ENCODE measurements at regions of chr2 and their contacts with region 1.

Region 1: DNA sequence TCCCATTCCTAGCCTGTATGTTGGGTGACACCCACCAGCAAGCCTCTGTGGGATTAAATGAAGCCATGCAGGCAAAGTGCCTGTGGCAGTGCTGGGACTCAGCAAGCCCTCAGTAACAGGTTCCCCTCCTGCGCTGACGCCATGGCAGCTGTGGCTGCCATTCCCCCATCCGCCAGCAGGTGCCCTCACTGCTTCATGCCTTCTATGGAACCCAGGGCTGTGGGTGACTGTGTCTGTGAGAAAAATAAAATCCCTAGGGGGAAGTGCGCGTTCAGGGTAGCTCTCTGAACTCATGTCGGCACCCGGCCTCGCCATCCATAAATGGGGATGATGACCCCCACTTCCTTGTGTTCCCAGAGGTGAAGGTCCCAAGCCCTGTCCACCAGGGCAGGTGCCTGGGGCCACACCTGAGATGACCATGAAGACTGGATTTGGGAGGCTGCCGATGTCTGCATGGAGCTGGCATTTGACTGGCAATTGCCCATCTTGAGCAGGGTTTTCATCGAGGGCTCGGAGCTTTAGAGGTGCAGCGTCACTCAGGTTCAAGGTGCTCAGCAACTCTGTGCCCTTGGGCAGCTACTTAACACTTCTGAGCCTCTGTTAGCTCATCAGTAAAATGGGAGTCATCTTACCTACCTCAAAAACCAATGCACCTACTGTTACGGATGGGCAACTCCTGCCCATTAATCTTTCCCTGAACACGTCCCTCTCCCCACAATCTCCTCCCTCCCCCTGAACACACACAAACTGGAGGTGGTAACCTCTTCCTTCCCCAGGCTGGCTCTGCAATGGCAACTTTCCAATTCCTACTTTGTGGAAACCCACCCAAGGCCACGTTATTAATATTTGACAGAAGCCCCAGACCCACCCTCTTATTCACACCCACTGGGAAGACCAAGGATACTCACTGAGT is 2.9 kb upstream of the MAL start:
- DNase-seq: peak; percentile 78 to 92 (median 84)
- ATAC-seq: peak; percentile 71
- H3K4me3 ChIP-seq: no peak overlapping the region
- H3K4me3 Mint-ChIP-seq: peak overlapping the region; percentile 84
- H3K27ac ChIP-seq: no peak overlapping the region
- H3K27ac Mint-ChIP-seq: peak overlapping the region; percentile 77
- H3K4me1 ChIP-seq: peaks cover 50% of the 10 kb centered on the region
- H3K4me1 Mint-ChIP-seq: peaks cover 50% of the 10 kb centered on the region
- H3K27me3 ChIP-seq: no peaks in the 10 kb centered on the region
- H3K27me3 Mint-ChIP-seq: no peaks in the 10 kb centered on the region
- CTCF ChIP-seq: peak; percentile 90

Region 2: DNA sequence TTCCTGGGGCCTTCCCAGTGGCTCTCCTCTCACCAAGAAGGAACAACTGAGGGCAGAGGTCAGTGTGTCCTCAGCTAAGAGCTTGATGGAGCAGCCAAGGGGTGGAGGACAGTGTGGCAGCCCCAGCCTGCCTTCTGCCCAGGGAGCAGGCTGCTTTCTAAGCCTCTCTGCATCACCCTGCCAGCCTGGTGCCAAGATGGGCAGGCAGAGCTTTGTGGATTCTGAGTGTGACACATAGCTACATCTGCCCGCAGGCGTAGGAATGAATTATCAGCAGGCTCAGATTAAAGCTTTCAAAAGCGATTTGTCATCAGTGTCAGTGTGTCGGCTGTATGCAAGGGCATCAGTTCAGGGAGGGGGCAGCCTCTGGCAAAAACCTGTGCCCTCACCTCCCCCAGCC is 11.7 kb after region 1 on chr2:
- CTCF ChIA-PET with region 1: interaction called, 14 read pairs
- POLR2A ChIA-PET with region 1: interaction called, 29 read pairs
- intact Hi-C with region 1: no loop called
- DNase-seq: peak in 1 of 14 experiments; percentile 21
- ATAC-seq: no peak
- H3K4me3 ChIP-seq: no peak overlapping the region
- H3K4me3 Mint-ChIP-seq: no peak overlapping the region
- H3K27ac ChIP-seq: no peak overlapping the region
- H3K27ac Mint-ChIP-seq: peak overlapping the region; percentile 71
- H3K4me1 ChIP-seq: peaks cover 93% of the 10 kb centered on the region
- H3K4me1 Mint-ChIP-seq: peaks cover 95% of the 10 kb centered on the region
- H3K27me3 ChIP-seq: no peaks in the 10 kb centered on the region
- H3K27me3 Mint-ChIP-seq: no peaks in the 10 kb centered on the region
- CTCF ChIP-seq: no peak

Region 3: GRCh38 chr2:95053543-95053942 is 31.0 kb after region 1 on chr2:
- CTCF ChIA-PET with region 1: interaction called, 37 read pairs
- POLR2A ChIA-PET with region 1: interaction called, 77 read pairs
- intact Hi-C with region 1: loop called (anchors 2 to 5 kb)
- DNase-seq: peak in 3 of 14 experiments; percentile 23 to 45 (median 42)
- ATAC-seq: peak; percentile 11
- H3K4me3 ChIP-seq: no peak overlapping the region
- H3K4me3 Mint-ChIP-seq: peak overlapping the region; percentile 2
- H3K27ac ChIP-seq: no peak overlapping the region
- H3K27ac Mint-ChIP-seq: peak overlapping the region; percentile 83
- H3K4me1 ChIP-seq: peaks cover 75% of the 10 kb centered on the region
- H3K4me1 Mint-ChIP-seq: peaks cover 85% of the 10 kb centered on the region
- H3K27me3 ChIP-seq: no peaks in the 10 kb centered on the region
- H3K27me3 Mint-ChIP-seq: no peaks in the 10 kb centered on the region
- CTCF ChIP-seq: no peak

Region 4: GRCh38 chr2:95076784-95077529 is 54.4 kb after region 1 on chr2:
- CTCF ChIA-PET with region 1: interaction called, 223 read pairs
- POLR2A ChIA-PET with region 1: interaction called, 749 read pairs
- intact Hi-C with region 1: loop called (anchors 1 kb)
- DNase-seq: peak; percentile 85 to 96 (median 93)
- ATAC-seq: peak; percentile 75
- H3K4me3 ChIP-seq: peak overlapping the region; percentile 52
- H3K4me3 Mint-ChIP-seq: peak overlapping the region; percentile 90
- H3K27ac ChIP-seq: peak overlapping the region; percentile 37 to 92
- H3K27ac Mint-ChIP-seq: peak overlapping the region; percentile 93
- H3K4me1 ChIP-seq: peaks cover 75% of the 10 kb centered on the region
- H3K4me1 Mint-ChIP-seq: peaks cover 80% of the 10 kb centered on the region
- H3K27me3 ChIP-seq: no peaks in the 10 kb centered on the region
- H3K27me3 Mint-ChIP-seq: no peaks in the 10 kb centered on the region
- CTCF ChIP-seq: peak; percentile 95

Region 5: DNA sequence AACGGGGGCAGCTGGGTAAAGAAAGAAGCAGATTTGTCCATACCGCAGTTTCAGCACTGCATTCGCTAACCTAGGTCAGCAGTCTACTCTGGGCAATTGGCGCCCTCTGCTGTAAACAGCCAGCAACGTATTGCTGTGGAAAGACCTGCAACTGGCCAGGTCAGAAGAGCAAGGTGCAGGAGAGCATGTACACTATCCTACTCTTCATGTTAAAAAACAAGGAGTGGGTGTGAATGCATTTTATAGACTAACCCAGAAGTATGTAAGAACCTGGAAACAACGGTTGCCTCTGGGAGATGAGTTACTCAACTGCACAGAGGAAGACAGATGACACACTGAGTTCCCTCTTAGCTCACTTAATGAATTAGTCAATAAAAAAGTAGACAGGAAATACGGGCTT is 92.9 kb after region 1 on chr2:
- CTCF ChIA-PET with region 1: interaction called, 85 read pairs
- POLR2A ChIA-PET with region 1: interaction called, 34 read pairs
- intact Hi-C with region 1: loop called (anchors 1 kb)
- DNase-seq: peak; percentile 59 to 87 (median 71)
- ATAC-seq: peak; percentile 99
- H3K4me3 ChIP-seq: no peak overlapping the region
- H3K4me3 Mint-ChIP-seq: peak overlapping the region; percentile 36
- H3K27ac ChIP-seq: no peak overlapping the region
- H3K27ac Mint-ChIP-seq: peak overlapping the region; percentile 45
- H3K4me1 ChIP-seq: peaks cover 27% of the 10 kb centered on the region
- H3K4me1 Mint-ChIP-seq: peaks cover 46% of the 10 kb centered on the region
- H3K27me3 ChIP-seq: no peaks in the 10 kb centered on the region
- H3K27me3 Mint-ChIP-seq: no peaks in the 10 kb centered on the region
- CTCF ChIP-seq: peak; percentile 89

Region 6: GRCh38 chr2:95159690-95160449 is 137.3 kb after region 1 on chr2 and contains the start of gene ZNF514:
- CTCF ChIA-PET with region 1: no interaction called
- POLR2A ChIA-PET with region 1: interaction called, 21 read pairs
- intact Hi-C with region 1: loop called in 1 of 2 experiments (anchors 5 kb)
- DNase-seq: peak; percentile 49 to 90 (median 71)
- ATAC-seq: peak; percentile 85
- H3K4me3 ChIP-seq: peak within 1 kb of the TSS; percentile 95
- H3K4me3 Mint-ChIP-seq: peak within 1 kb of the TSS; percentile 95
- H3K27ac ChIP-seq: peak within 1 kb of the TSS; percentile 33 to 62
- H3K27ac Mint-ChIP-seq: peak within 1 kb of the TSS; percentile 86
- H3K4me1 ChIP-seq: peaks cover 22% of the 10 kb centered on the region
- H3K4me1 Mint-ChIP-seq: peaks cover 29% of the 10 kb centered on the region
- H3K27me3 ChIP-seq: no peaks in the 10 kb centered on the region
- H3K27me3 Mint-ChIP-seq: no peaks in the 10 kb centered on the region
- CTCF ChIP-seq: no peak
- total RNA-seq, gene ZNF514: 4.7 to 6.3 TPM

Region 7: GRCh38 chr2:95207111-95207961 is 184.8 kb after region 1 on chr2 and contains the start of gene ZNF892:
- CTCF ChIA-PET with region 1: no interaction called
- POLR2A ChIA-PET with region 1: no interaction called
- intact Hi-C with region 1: loop called (anchors 1 kb)
- DNase-seq: peak; percentile 55 to 87 (median 74)
- ATAC-seq: peak; percentile 95
- H3K4me3 ChIP-seq: peak within 1 kb of the TSS; percentile 89
- H3K4me3 Mint-ChIP-seq: peak within 1 kb of the TSS; percentile 95
- H3K27ac ChIP-seq: peak within 1 kb of the TSS; percentile 63 to 77
- H3K27ac Mint-ChIP-seq: peak within 1 kb of the TSS; percentile 80
- H3K4me1 ChIP-seq: peaks cover 17% of the 10 kb centered on the region
- H3K4me1 Mint-ChIP-seq: peaks cover 29% of the 10 kb centered on the region
- H3K27me3 ChIP-seq: no peaks in the 10 kb centered on the region
- H3K27me3 Mint-ChIP-seq: no peaks in the 10 kb centered on the region
- CTCF ChIP-seq: peak; percentile 61
- total RNA-seq, gene ZNF892: 0.82 to 1.1 TPM